ENCODE measurements at regions of chr17 and their contacts with region 1.

Region 1: GRCh38 chr17:78979780-78980623 is at the start of gene LGALS3BP:
- DNase-seq: peak; percentile 49 to 69
- H3K4me3 ChIP-seq: 0 out of 2 replicates have a peak within 1 kb of the TSS, but pooled peaks have one; percentile 3
- H3K4me3 Mint-ChIP-seq: no peak within 1 kb of the TSS
- H3K27ac Mint-ChIP-seq: no peak within 1 kb of the TSS
- H3K4me1 ChIP-seq: peaks cover 19% of the 10 kb centered on the region
- H3K4me1 Mint-ChIP-seq: no peaks in the 10 kb centered on the region
- H3K27me3 ChIP-seq: no peaks in the 10 kb centered on the region
- H3K27me3 Mint-ChIP-seq: no peaks in the 10 kb centered on the region
- CTCF ChIP-seq: no peak
- total RNA-seq, gene LGALS3BP: 65.4 and 68.1 TPM in 2 replicates

Region 2: GRCh38 chr17:78878261-78878660 is 101.7 kb before region 1 on chr17:
- CTCF ChIA-PET with region 1: no interaction called
- POLR2A ChIA-PET with region 1: interaction called, 17 read pairs
- intact Hi-C with region 1: no loop called
- DNase-seq: no peak
- H3K4me3 ChIP-seq: no peak overlapping the region
- H3K4me3 Mint-ChIP-seq: no peak overlapping the region
- H3K27ac Mint-ChIP-seq: no peak overlapping the region
- H3K4me1 ChIP-seq: peaks cover 15% of the 10 kb centered on the region
- H3K4me1 Mint-ChIP-seq: peaks cover 12% of the 10 kb centered on the region
- H3K27me3 ChIP-seq: no peaks in the 10 kb centered on the region
- H3K27me3 Mint-ChIP-seq: no peaks in the 10 kb centered on the region
- CTCF ChIP-seq: no peak

Region 3: GRCh38 chr17:79009397-79010308 is 29.7 kb after region 1 on chr17 and contains the start of gene CANT1:
- CTCF ChIA-PET with region 1: no interaction called
- POLR2A ChIA-PET with region 1: interaction called, 10 read pairs
- intact Hi-C with region 1: no loop called
- DNase-seq: peak; percentile 83 to 93
- H3K4me3 ChIP-seq: peak within 1 kb of the TSS; percentile 91
- H3K4me3 Mint-ChIP-seq: peak within 1 kb of the TSS; percentile 95
- H3K27ac Mint-ChIP-seq: peak within 1 kb of the TSS; percentile 92
- H3K4me1 ChIP-seq: peaks cover 39% of the 10 kb centered on the region
- H3K4me1 Mint-ChIP-seq: peaks cover 38% of the 10 kb centered on the region
- H3K27me3 ChIP-seq: no peaks in the 10 kb centered on the region
- H3K27me3 Mint-ChIP-seq: no peaks in the 10 kb centered on the region
- CTCF ChIP-seq: no peak
- total RNA-seq, gene CANT1: 68.9 and 86.4 TPM in 2 replicates

Region 4: GRCh38 chr17:79252886-79253285 is 272.9 kb after region 1 on chr17:
- CTCF ChIA-PET with region 1: no interaction called
- POLR2A ChIA-PET with region 1: no interaction called
- intact Hi-C with region 1: no loop called
- DNase-seq: no peak
- H3K4me3 ChIP-seq: no peak overlapping the region
- H3K4me3 Mint-ChIP-seq: no peak overlapping the region
- H3K27ac Mint-ChIP-seq: no peak overlapping the region
- H3K4me1 ChIP-seq: no peaks in the 10 kb centered on the region
- H3K4me1 Mint-ChIP-seq: no peaks in the 10 kb centered on the region
- H3K27me3 ChIP-seq: peaks cover 3% of the 10 kb centered on the region
- H3K27me3 Mint-ChIP-seq: peaks cover 48% of the 10 kb centered on the region
- CTCF ChIP-seq: no peak

Measured in Caco-2 (cell line).